AG04450 (cell line): ENCODE measurements at regions of chr3 and their contacts with region 1.

Region 1: GRCh38 chr3:52001443-52001974 is 5.8 kb upstream of the RPL29 start:
- DNase-seq: no peak
- H3K4me3 ChIP-seq: no peak overlapping the region
- H3K27ac ChIP-seq: no peak overlapping the region
- H3K27me3 ChIP-seq: peaks cover 8% of the 10 kb centered on the region
- CTCF ChIP-seq: peak; percentile 89

Region 2: GRCh38 chr3:51963951-51964451 is 37.5 kb before region 1 on chr3:
- CTCF ChIA-PET with region 1: no interaction called
- POLR2A ChIA-PET with region 1: no interaction called
- DNase-seq: no peak
- H3K4me3 ChIP-seq: no peak overlapping the region
- H3K27ac ChIP-seq: no peak overlapping the region
- H3K27me3 ChIP-seq: no peaks in the 10 kb centered on the region
- CTCF ChIP-seq: no peak

Region 3: GRCh38 chr3:51974963-51975851 is 26.3 kb before region 1 on chr3 and contains the start of gene ABHD14A:
- CTCF ChIA-PET with region 1: no interaction called
- POLR2A ChIA-PET with region 1: no interaction called
- DNase-seq: no peak
- H3K4me3 ChIP-seq: peak within 1 kb of the TSS; percentile 91
- H3K27ac ChIP-seq: peak within 1 kb of the TSS; percentile 47
- H3K27me3 ChIP-seq: no peaks in the 10 kb centered on the region
- CTCF ChIP-seq: no peak
- polyA plus RNA-seq, gene ABHD14A: 8.2 and 9.9 TPM in 2 replicates

Region 4: DNA sequence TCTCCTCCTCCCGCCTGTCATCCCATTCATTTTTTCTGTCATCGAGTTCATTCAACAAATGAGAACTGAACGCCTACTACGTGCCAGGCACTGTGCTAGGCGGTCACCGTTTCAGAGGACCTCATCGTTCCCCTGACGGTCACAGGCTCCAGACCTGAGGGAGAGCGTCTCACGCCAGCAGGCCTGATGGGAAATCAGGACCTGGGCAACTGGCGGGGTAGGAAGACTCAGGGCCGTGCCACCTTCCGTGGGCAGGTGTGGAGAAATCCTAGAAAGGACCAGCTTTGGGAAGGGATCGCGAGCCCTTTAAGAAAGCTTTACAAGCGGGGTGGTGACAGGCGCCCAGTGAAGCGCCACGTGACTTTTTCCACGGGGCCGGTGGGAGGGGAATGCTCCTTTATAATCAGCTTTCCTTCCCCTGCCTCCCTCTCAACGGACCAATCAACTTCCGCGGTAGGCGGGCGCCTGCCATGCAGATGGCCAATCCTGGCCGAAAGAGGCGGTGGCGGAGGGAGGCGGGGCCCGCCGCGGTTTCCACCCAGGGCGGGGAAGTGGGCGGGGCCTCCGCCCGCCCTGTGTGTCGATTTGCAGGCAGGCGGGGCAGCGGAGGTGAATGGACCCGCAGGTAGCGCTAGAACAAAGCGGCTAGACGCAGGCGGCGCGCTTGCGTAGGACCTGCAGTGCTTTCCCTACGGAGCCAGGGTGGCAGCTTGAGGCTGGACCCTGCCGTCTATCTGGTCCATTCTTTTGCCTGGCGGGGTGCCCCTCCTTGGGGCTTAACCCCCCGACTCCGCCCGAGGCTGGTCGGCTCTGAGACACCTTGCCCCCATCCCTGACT is 55.7 kb after region 1 on chr3:
- CTCF ChIA-PET with region 1: interaction called, 23 read pairs
- POLR2A ChIA-PET with region 1: interaction called, 3 read pairs
- DNase-seq: peak; percentile 95
- H3K4me3 ChIP-seq: peak overlapping the region; percentile 68
- H3K27ac ChIP-seq: peak overlapping the region; percentile 77
- H3K27me3 ChIP-seq: no peaks in the 10 kb centered on the region
- CTCF ChIP-seq: no peak

Region 5: DNA sequence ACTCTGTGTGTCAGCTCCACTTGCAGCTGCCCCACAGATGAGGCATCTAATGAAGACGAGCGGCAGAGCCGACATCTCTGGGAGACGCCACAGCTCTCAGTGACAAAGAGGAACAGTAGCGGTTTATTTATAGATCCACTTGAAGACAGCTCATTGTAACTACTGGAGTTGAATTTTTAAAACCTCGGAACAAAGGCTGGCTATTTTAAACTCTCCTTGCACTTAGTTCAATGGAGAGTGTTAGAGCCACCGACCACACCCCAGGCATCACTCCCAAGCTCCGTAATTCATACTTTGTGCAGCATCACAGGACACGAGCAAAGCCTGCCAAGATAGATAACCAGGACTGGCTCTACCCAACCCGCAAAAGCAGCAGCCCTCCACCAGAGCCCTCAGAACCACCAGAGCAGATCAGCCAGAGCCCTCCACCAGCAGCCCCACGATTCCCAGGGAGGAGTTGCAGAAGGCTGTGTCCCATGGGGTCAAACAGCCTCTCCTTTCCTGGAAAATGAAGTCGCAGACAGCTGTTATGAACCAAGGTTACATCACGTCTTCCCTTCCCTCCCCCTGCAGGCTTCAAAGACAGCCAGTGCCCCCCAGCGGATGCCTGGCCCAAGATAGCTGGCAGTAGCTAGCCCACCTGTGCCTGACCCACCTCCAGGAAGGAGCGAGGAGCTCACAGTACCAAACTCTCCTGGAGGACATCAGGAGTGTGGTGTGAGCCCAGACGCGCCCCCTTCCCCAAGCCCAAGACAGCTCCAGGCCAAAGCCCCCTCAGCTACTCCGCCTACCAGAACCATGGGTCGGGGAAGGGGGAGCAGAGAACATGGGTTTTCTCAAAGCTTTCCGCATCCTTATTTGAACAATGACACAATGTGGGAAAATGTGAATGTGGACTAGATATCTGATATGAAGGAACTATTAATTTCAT is 107.1 kb after region 1 on chr3:
- CTCF ChIA-PET with region 1: interaction called, 10 read pairs
- POLR2A ChIA-PET with region 1: no interaction called
- DNase-seq: no peak
- H3K4me3 ChIP-seq: no peak overlapping the region
- H3K27ac ChIP-seq: no peak overlapping the region
- H3K27me3 ChIP-seq: no peaks in the 10 kb centered on the region
- CTCF ChIP-seq: peak; percentile 32; the same call in 1 of the 2 replicates

Region 6: GRCh38 chr3:52123106-52123725 is 121.7 kb after region 1 on chr3:
- CTCF ChIA-PET with region 1: interaction called, 142 read pairs
- POLR2A ChIA-PET with region 1: no interaction called
- DNase-seq: peak; percentile 24
- H3K4me3 ChIP-seq: no peak overlapping the region
- H3K27ac ChIP-seq: no peak overlapping the region
- H3K27me3 ChIP-seq: no peaks in the 10 kb centered on the region
- CTCF ChIP-seq: peak; percentile 98

Region 7: DNA sequence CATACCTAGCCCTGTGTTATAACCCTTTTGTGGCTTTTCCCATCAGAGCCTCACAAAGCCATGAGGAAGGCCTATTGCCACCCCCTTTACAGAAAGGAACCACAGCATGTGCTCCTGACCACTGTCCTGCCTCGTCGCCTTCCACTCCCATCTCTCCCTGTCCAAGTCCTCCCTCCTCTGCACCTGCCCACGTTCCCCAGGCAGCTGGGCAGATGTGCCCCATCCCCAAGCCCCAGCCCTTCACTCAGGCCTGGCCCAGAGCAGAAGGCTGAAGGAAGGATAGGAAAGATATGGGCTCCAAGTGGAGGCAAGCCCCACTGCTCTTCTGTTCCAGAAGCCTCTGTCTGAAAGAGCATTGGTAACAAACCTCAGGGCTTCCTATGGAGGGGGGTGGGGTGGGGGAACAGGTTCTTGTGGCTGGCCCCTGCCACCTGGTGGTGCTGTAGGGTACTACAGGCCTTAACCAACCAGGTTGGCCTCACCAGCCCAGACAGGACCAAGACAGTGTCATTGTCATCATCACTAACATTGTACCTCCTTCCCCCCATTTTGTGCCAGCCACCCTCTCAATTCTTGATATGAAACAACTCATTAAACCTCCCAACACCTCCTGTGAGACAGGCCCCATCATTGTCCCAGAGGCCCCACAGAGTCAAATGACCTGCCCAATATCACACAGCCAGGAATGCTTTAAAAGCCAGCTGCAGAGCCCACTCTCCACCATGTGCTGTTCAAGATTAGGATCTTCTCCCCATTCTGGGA is 142.7 kb after region 1 on chr3:
- CTCF ChIA-PET with region 1: interaction called, 138 read pairs
- POLR2A ChIA-PET with region 1: no interaction called
- DNase-seq: peak; percentile 61
- H3K4me3 ChIP-seq: no peak overlapping the region
- H3K27ac ChIP-seq: no peak overlapping the region
- H3K27me3 ChIP-seq: no peaks in the 10 kb centered on the region
- CTCF ChIP-seq: peak; percentile 98

Region 8: GRCh38 chr3:52471371-52472238 is 470.1 kb after region 1 on chr3:
- CTCF ChIA-PET with region 1: no interaction called
- POLR2A ChIA-PET with region 1: no interaction called
- DNase-seq: no peak
- H3K4me3 ChIP-seq: no peak overlapping the region
- H3K27ac ChIP-seq: no peak overlapping the region
- H3K27me3 ChIP-seq: no peaks in the 10 kb centered on the region
- CTCF ChIP-seq: peak; percentile 71

Region 9: GRCh38 chr3:52507359-52507758 is 505.9 kb after region 1 on chr3:
- CTCF ChIA-PET with region 1: no interaction called
- POLR2A ChIA-PET with region 1: no interaction called
- DNase-seq: no peak
- H3K4me3 ChIP-seq: no peak overlapping the region
- H3K27ac ChIP-seq: no peak overlapping the region
- H3K27me3 ChIP-seq: peaks cover 13% of the 10 kb centered on the region
- CTCF ChIP-seq: no peak